ENCODE measurements at regions of chr18 and their contacts with region 1.

Region 1: DNA sequence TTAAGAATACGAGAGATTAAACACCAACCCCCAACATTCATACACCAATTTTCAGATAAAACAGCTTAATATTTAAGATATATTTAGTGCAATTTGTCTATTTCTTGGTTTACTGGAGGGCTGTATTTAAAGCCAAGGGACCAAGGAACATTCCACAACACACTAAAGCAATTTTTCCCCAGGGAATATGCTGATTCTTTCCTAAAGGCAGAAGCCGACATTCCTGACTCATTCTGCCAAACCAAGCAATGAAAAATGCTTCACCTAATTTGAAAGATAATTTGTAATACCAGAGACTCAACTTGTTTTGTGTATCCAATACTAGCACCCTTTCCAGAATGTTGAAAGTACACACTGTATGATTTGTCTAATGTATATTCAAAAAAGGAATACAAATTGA is 1267.6 kb upstream of the PIK3C3 start:
- DNase-seq: no peak
- ATAC-seq: no peak
- H3K4me3 ChIP-seq: no peak overlapping the region
- H3K27ac ChIP-seq: no peak overlapping the region
- H3K4me1 ChIP-seq: no peaks in the 10 kb centered on the region
- H3K27me3 ChIP-seq: no peaks in the 10 kb centered on the region
- CTCF ChIP-seq: no peak
- EP300 ChIP-seq: no peak
- POLR2A ChIP-seq: no peak
- RAD21 ChIP-seq: no peak

Region 2: DNA sequence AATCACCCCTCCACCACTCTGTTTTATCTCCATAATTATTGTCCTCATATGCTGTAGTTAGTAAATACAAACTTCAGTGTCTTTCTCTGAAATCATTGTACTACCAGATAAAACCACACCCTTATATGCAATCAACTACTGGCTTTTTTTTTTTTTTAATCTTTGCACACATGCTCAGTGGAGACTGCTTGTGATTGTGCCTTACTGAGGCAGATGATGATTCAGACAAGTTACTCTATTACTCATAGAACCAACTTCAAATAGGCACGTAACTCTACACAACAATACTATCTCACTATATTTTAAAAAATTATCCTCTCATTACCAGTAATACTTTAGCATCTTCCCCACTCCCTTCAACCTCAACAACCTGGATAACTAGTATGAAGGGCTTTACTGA is 10.7 kb before region 1 on chr18:
- CTCF ChIA-PET with region 1: no interaction called
- POLR2A ChIA-PET with region 1: no interaction called
- RAD21 ChIA-PET with region 1: no interaction called
- SMC1A ChIA-PET with region 1: interaction called, 4 read pairs
- in situ Hi-C with region 1: no loop called
- intact Hi-C with region 1: loop called (anchors 1 kb)
- DNase-seq: no peak
- ATAC-seq: no peak
- H3K4me3 ChIP-seq: no peak overlapping the region
- H3K27ac ChIP-seq: no peak overlapping the region
- H3K4me1 ChIP-seq: no peaks in the 10 kb centered on the region
- H3K27me3 ChIP-seq: no peaks in the 10 kb centered on the region
- CTCF ChIP-seq: no peak
- EP300 ChIP-seq: no peak
- POLR2A ChIP-seq: no peak
- RAD21 ChIP-seq: no peak